RWPE1 (cell line): ENCODE measurements at regions of chr4 and their contacts with region 1.

Region 1: DNA sequence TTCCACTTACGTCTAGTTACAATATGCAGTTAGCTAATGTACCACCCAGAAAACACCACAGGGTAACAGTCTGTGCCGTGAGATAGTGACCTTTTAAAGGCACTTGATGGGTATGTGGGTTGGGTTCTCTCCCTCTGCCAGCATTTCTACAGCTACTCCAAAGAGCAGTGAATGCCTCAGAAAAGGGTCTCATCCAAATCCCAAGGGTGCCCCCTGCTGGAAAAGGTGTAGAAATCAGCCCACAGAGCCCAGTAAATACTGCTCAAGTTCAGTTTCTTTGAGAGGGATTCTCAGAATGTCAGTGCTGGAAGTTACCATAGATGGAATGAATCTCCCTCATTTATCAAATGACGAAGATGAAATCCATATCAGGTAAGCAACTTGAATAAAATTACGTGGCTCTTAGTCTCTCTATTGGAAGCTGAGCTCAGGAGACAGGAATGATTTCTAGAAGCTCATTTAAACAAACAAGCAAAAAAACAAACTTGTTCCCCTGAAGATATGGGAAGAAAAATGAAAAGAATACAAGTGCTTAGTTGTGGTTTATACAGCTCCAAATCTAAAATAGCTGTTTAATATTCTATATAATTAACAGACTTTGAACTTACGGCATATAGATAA is 9.5 kb downstream of the RNF175 start:
- DNase-seq: peak; percentile 60
- H3K27ac ChIP-seq: no peak overlapping the region
- CTCF ChIP-seq: peak; percentile 72

Region 2: GRCh38 chr4:152535903-152536544 is 1214.3 kb before region 1 on chr4 and contains the start of gene FBXW7:
- CTCF ChIA-PET with region 1: no interaction called
- POLR2A ChIA-PET with region 1: no interaction called
- DNase-seq: peak; percentile 98
- H3K27ac ChIP-seq: peak within 1 kb of the TSS; percentile 95
- CTCF ChIP-seq: no peak

Region 3: DNA sequence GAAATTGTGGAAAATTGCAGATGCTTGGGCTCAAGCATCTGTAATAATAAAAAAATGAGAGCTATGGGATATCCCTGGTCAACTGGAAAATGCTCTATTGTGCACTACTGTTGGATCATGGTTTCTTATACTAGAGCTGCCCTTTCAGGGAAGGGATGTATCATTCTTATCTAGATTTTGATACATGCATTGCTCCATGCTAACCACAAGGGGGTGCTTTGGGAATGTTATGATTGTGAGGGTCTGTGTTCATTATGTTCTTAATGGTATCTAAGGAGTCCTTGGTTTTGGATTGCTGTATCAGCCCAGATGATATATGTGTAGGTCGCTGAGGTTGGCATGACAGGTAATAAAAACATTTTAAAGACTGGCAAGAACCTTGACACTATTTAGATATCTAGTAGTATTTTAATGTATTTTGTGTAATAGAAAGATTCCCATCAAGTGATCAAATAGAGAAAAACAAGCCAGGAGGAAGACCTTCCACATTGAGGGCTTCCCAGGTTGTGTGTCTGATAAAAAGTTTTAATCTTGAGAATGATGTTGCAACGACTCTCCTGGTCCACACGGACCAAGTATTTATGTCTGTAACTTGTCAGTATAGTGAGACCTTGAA is 115.5 kb before region 1 on chr4:
- CTCF ChIA-PET with region 1: interaction called, 14 read pairs
- POLR2A ChIA-PET with region 1: no interaction called
- DNase-seq: peak; percentile 36
- H3K27ac ChIP-seq: no peak overlapping the region
- CTCF ChIP-seq: peak; percentile 65

Region 4: GRCh38 chr4:153713866-153714646 is 36.3 kb before region 1 on chr4:
- CTCF ChIA-PET with region 1: no interaction called
- POLR2A ChIA-PET with region 1: no interaction called
- DNase-seq: peak; percentile 81
- H3K27ac ChIP-seq: no peak overlapping the region
- CTCF ChIP-seq: no peak

Region 5: GRCh38 chr4:153955327-153955726 is 205.0 kb after region 1 on chr4:
- CTCF ChIA-PET with region 1: no interaction called
- POLR2A ChIA-PET with region 1: no interaction called
- DNase-seq: no peak
- H3K27ac ChIP-seq: no peak overlapping the region
- CTCF ChIP-seq: no peak

Region 6: DNA sequence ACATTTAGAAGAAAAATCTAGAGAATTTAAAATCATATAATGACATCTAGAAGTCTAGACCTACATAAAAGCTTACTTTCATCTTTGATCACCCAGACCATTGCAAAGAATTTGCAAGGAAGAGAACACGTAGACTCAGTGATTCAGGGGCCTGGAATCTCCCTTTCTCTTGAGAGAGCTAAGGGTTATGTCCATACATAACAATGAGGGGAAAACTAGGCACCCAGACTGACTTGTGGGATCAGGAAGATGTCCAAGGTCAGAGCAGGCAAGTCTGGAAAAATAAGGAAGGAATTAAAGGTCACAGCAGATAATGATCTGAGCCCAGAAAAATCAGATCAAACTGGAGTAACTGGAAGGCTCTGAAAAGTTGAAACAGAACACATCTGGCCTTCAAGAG is 237.0 kb after region 1 on chr4:
- CTCF ChIA-PET with region 1: no interaction called
- POLR2A ChIA-PET with region 1: no interaction called
- DNase-seq: no peak
- H3K27ac ChIP-seq: no peak overlapping the region
- CTCF ChIP-seq: no peak